Activated T-helper 1 cell treated with anti-CD3 and anti-CD28 coated beads, Interleukin-12 subunit alpha, Interleukin-12 subunit beta, Interleukin-2, Interleukin-4 antibody, amounts not matched to agents 30 ng/mL and 10 ng/mL and 1 ng/mL, durations not matched to agents 14 hours and 24 hours and 36 hours (primary cell): ENCODE measurements at regions of chr3 and their contacts with region 1.

Region 1: DNA sequence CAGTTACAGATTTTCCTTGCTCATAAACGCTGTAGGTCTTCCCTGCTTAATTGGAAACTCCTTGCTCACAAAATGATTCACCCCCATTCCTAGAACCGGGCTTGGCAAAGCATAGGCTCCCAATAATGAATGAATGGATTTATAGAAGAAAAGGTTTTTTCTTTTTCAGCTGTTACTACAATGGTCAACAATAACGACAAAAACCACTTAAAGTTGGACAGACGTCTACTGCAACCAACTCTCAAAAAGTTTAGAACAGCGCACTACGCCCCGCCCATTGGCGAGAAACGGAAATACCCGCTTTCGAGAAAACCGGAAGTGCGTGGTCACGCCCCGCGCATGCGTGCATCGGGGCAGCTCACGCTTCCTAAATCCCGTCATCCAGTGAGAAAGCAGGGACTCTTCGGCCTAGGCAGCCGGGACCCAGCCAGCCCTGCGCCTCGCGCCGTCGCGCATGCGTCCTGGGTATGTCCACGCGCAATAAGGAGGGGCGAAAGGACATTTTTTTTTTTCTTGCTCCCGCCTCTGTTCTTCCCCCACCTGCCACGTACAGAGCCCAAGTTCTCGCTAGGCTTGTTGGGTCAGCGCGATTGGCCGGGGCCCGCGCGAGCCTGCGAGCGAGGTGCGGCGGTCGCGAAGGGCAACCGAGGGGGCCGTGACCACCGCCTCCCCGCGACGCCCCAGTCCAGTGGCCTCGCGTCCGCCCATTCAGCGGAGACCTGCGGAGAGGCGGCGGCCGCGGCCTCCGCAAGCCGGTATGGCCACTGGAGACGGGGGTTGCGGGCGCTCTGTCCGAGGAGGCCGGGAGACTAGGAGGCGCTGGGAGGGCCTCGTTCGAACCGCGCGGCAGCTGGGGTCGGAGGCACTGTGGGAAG is at the start of gene TFG:
- DNase-seq: peak; percentile 98
- H3K4me3 Mint-ChIP-seq: peak within 1 kb of the TSS; percentile 84
- H3K27ac Mint-ChIP-seq: peak within 1 kb of the TSS; percentile 90
- H3K4me1 Mint-ChIP-seq: peaks cover 33% of the 10 kb centered on the region
- H3K27me3 Mint-ChIP-seq: no peaks in the 10 kb centered on the region
- total RNA-seq, gene TFG: 73.0 and 75.3 TPM in 2 replicates

Region 2: DNA sequence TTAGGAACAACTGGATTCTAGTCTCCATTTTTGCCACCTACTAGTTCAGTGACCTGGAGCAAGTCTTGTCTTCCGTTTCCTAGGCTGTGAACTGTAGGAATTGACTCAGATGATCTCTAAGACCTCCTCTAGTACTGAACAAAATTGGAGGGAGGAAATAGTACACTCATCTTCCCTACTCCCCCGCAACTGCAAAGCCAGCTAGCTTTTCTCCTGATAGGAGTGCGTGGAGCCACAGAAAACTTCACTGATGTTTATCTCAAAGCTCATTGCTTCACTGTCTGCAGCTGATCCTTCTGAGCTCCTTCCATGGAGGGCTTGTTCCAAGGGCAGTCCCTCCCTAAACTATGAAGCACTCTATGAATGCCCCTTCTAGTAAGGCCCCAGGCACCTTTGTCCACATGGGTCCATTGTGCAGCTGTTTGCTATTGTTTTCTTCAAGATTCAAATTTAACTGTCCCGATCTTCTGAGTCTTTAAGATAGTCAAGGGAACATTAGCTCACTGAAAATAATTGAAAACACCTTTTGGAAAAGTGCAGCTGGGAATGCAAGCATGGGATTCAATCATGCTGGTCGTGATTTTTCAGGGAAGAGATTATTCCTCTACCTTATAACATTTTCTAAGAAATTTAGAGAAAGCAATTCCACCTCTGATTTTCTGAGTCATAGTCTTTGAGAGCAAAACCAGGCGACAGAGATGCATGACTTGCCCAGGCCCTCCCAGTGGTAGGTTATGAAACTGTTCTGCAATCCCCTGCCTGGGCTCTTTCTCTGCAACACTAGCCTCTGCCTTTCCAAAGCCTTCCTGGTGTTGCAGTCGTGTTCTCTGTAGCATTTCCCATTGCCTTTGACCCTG is 619.2 kb before region 1 on chr3:
- intact Hi-C with region 1: loop called (anchors 5 kb)
- DNase-seq: no peak
- H3K4me3 Mint-ChIP-seq: peak overlapping the region; percentile 0
- H3K27ac Mint-ChIP-seq: peak overlapping the region; percentile 60
- H3K4me1 Mint-ChIP-seq: peaks cover 49% of the 10 kb centered on the region
- H3K27me3 Mint-ChIP-seq: peaks cover 3% of the 10 kb centered on the region

Region 3: GRCh38 chr3:100334488-100335351 is 374.5 kb before region 1 on chr3 and contains the start of gene NIT2:
- intact Hi-C with region 1: loop called (anchors 1 kb)
- DNase-seq: peak; percentile 73
- H3K4me3 Mint-ChIP-seq: peak within 1 kb of the TSS; percentile 94
- H3K27ac Mint-ChIP-seq: peak within 1 kb of the TSS; percentile 98
- H3K4me1 Mint-ChIP-seq: peaks cover 14% of the 10 kb centered on the region
- H3K27me3 Mint-ChIP-seq: no peaks in the 10 kb centered on the region
- total RNA-seq, gene NIT2: 65.9 and 69.5 TPM in 2 replicates

Region 4: DNA sequence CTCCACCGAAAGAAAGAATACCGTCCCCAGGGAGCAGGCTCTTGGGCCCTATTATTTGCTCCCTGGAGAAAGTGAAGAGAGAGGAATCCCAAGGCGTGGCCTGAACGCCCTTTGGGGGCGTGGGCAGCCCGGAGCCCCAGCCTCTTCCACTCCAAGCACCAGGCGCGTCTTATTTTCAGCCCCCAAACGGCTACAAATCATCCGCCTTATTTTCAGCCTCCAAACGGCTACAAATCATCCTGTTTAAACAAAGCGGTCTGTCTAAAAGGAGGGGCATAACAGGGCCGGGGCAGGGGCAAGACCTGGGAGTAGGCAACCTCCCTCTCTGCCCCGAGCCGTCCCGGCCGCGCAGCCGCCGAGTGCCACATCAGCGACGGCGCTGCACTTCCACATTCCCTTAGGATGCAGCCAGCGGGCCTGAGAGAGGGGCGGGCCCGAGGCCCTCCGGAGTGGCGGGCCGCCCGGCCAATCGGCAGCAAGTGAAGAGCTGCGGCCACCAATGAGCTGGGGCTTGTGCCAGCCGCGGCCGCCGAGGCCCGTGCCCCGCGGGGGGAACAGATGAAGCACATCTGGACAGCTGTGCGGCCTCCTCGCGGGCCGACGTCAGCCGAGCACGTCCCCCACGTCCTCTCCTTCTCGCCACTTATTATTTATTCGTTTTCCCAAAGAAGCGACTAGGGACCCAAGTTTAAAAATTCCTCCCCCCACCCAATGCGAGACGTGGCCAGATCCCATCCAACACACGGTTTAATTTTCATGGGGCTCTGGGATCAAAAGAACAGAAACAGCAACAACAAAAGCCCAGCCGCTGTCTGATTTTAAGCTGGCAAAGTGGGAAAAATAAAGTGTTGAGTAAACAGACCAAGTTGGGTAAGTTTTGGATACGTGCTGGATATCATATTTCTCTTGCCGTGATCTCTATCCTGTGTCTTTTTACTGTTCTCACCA is 216.9 kb before region 1 on chr3 and contains the start of gene TMEM45A:
- intact Hi-C with region 1: loop called (anchors 1 kb)
- DNase-seq: peak; percentile 73
- H3K4me3 Mint-ChIP-seq: peak within 1 kb of the TSS; percentile 86
- H3K27ac Mint-ChIP-seq: no peak within 1 kb of the TSS
- H3K4me1 Mint-ChIP-seq: peaks cover 17% of the 10 kb centered on the region
- H3K27me3 Mint-ChIP-seq: peaks cover 18% of the 10 kb centered on the region
- total RNA-seq, gene TMEM45A: 0.13 and 0.34 TPM in 2 replicates

Region 5: GRCh38 chr3:100665230-100665629 is 44.0 kb before region 1 on chr3:
- intact Hi-C with region 1: loop called (anchors 1 kb)
- DNase-seq: peak; percentile 36
- H3K4me3 Mint-ChIP-seq: peak overlapping the region; percentile 58
- H3K27ac Mint-ChIP-seq: peak overlapping the region; percentile 80
- H3K4me1 Mint-ChIP-seq: peaks cover 36% of the 10 kb centered on the region
- H3K27me3 Mint-ChIP-seq: peaks cover 3% of the 10 kb centered on the region

Region 6: GRCh38 chr3:100811779-100812507 is 102.7 kb after region 1 on chr3:
- intact Hi-C with region 1: no loop called
- DNase-seq: no peak
- H3K4me3 Mint-ChIP-seq: no peak overlapping the region
- H3K27ac Mint-ChIP-seq: no peak overlapping the region
- H3K4me1 Mint-ChIP-seq: no peaks in the 10 kb centered on the region
- H3K27me3 Mint-ChIP-seq: peaks cover 2% of the 10 kb centered on the region

Region 7: GRCh38 chr3:101512646-101513418 is 803.6 kb after region 1 on chr3 and contains the start of gene SENP7:
- intact Hi-C with region 1: loop called (anchors 5 kb)
- DNase-seq: peak; percentile 72
- H3K4me3 Mint-ChIP-seq: peak within 1 kb of the TSS; percentile 94
- H3K27ac Mint-ChIP-seq: peak within 1 kb of the TSS; percentile 95
- H3K4me1 Mint-ChIP-seq: peaks cover 31% of the 10 kb centered on the region
- H3K27me3 Mint-ChIP-seq: no peaks in the 10 kb centered on the region
- total RNA-seq, gene SENP7: 9.1 and 10.7 TPM in 2 replicates

Region 8: DNA sequence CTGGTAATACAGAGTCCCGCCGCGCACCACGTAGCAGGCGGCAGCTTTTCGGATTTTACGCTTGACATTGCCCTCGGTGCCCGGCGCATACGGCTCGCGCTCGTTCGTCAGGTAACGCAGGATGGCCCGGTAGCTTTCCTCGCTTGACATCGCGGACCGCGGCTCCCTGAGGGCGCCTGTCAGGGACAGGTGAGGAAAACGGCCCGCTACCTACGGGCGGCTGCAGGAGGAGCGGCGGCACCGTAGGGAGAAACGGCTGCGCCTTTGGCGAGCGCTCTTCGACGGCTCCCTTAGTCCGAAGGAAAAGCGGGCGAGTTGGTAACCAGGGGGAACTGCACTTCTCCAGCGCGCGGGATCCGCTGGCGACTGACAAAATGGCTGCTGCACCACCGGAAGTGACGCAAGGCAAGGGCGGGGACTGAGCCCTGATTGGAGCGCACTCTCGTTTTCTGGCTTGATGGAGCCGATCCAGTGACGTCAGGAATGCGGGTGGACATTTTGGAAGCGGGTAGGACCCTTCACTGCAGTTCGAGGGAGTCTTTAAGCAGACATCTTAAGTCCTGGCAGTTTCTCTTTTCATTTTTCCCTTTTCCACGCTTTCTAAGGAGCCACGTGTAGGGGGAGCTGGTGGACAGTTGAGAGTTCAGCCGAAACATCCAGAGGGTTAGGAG is 967.7 kb after region 1 on chr3 and contains the start of gene ZBTB11:
- intact Hi-C with region 1: loop called (anchors 1 kb)
- DNase-seq: peak; percentile 99
- H3K4me3 Mint-ChIP-seq: peak within 1 kb of the TSS; percentile 96
- H3K27ac Mint-ChIP-seq: peak within 1 kb of the TSS; percentile 97
- H3K4me1 Mint-ChIP-seq: peaks cover 56% of the 10 kb centered on the region
- H3K27me3 Mint-ChIP-seq: no peaks in the 10 kb centered on the region
- total RNA-seq, gene ZBTB11: 29.0 and 31.9 TPM in 2 replicates